ENCODE measurements at regions of chr2 and their contacts with region 1.

Region 1: DNA sequence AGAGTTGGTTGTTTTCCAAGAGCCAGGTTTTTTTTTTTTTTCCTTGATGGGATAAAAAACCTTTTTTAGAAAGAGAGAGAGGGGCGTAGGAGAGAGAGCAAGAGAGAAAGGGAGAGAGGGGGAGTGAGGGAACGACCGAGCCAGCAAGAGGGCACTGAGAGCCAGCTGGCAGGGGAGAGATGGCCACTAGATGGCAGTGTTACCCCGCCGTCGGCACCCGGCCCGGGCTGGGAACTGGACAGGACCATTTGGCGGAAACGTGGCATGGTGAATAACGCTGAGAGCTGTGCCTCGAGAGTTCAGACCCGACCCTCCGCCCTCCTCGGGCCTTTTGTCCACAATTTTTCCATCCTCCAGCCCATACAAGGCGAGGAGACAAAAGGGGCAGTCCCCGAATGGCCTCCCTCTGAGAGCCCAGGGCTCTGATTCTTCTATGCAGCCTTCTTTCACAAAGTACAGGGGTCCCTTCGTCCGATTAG is 286.7 kb upstream of the VRK2 start:
- DNase-seq: peak; percentile 88

Region 2: DNA sequence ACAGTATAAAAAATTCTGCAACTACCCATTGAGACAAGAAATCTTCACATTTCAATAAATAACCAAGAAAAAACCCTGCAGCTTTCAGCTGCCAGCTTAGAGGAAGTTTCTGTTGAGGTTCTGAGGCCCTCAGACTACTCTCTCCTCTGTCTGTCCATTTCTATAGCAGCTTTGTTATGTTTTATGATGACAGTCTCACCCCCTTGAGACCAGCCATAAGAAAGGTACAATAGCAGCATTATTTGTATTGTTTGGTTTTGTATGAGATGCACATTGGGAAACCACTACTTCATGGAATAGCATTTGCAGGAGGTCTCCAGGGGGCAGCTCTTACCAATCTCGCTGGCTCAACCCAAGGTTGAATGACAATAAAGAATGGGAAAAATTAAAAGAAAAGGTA is 47.9 kb before region 1 on chr2:
- in situ Hi-C with region 1: no loop called
- DNase-seq: no peak

Region 3: DNA sequence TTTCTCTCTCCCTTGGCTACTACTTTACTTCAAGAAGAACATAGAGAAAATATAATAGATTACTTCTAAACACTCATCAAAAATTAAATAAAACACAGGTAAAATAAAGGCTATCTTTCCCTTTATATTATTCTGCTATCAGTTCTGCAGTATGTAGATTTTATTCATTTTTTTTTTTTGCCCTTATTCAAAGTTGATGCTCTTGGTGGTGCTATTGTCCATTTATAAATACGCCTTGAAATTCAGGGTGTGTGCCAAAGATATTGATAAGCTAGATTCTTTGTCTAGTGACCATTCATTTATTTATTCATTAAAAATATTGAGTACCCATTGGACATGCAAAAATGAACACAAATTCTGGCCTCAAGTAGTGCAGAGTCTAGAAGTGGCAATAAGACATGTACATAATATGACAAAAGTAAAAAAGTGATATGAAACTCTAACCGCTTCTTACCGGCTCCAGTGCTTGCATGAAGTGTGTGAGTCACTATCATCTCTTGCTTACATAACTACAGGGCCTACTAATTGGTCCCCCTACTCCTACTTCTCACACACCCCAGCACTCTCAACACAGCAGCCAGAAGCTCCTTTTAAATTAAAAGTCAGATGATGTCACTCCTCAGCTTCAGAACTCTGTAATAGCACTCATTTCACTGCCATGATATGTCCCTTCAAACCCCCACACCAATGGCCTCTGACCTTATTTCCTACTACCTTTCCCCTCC is 689.6 kb after region 1 on chr2:
- in situ Hi-C with region 1: loop called (anchors 25 kb)
- DNase-seq: peak; percentile 39